Sigmoid colon (tissue), 7 donors: ENCODE measurements at regions of chr7 and their contacts with region 1.

Region 1: GRCh38 chr7:123557398-123558288 is at the start of gene NDUFA5:
- DNase-seq: peak; percentile 99
- H3K4me3 ChIP-seq: peak within 1 kb of the TSS; percentile 66 to 98 (median 91)
- H3K27ac ChIP-seq: peak within 1 kb of the TSS; percentile 87 to 96 (median 92)
- H3K4me1 ChIP-seq: peaks cover 0 to 42% (median 31%) of the 10 kb centered on the region in 4 donors
- H3K27me3 ChIP-seq: no peaks in the 10 kb centered on the region
- CTCF ChIP-seq: no peak
- EP300 ChIP-seq: peak in 1 of 4 donors; percentile 8
- POLR2A ChIP-seq: peak; percentile 42 to 54
- total RNA-seq, gene NDUFA5: 60.4 to 112 (median 89.8) TPM

Region 2: GRCh38 chr7:122143751-122144711 is 1413.6 kb before region 1 on chr7 and contains the start of gene AASS:
- intact Hi-C with region 1: loop called (anchors 10 kb)
- DNase-seq: peak; percentile 100
- H3K4me3 ChIP-seq: peak within 1 kb of the TSS; percentile 80 to 91 (median 88)
- H3K27ac ChIP-seq: peak within 1 kb of the TSS; percentile 91 to 99 (median 97)
- H3K4me1 ChIP-seq: peaks cover 0 to 21% (median 10%) of the 10 kb centered on the region in 4 donors
- H3K27me3 ChIP-seq: no peaks in the 10 kb centered on the region
- CTCF ChIP-seq: no peak
- EP300 ChIP-seq: peak in 3 of 4 donors; percentile 30 to 91 (median 31)
- POLR2A ChIP-seq: peak; percentile 69 to 72
- total RNA-seq, gene AASS: 24.3 to 40.0 (median 27.0) TPM

Region 3: DNA sequence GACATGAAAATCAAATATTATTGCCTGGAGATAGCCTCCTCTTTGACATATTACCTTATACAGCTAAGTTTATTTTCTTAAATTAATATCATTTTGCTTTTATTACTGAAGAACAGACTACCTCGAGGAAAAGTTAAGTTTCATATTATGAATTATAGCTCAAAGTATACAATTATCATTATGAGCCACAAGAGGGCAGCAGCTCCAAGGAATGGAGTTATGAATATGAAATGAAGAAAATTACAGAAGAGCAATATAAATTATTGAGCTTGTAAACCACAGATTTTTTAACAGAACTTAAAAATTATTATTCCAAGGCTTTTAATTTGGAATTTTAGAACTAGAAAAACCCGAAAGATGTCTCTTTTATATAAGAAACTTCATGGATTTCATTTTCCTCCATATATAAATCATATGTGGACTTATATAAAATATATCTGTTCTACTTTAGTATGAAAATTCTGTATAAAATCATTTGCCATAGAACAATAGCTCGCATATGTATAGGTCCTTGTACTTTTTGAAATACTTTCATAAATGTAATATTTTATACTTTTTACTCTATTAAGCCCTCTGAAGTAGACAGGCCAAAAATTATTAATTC is 63.3 kb before region 1 on chr7:
- intact Hi-C with region 1: loop called (anchors 5 kb)
- DNase-seq: no peak
- H3K4me3 ChIP-seq: no peak overlapping the region
- H3K27ac ChIP-seq: no peak overlapping the region
- H3K4me1 ChIP-seq: no peaks in the 10 kb centered on the region
- H3K27me3 ChIP-seq: no peaks in the 10 kb centered on the region
- CTCF ChIP-seq: peak in 3 of 4 experiments; percentile 26 to 64 (median 46)
- EP300 ChIP-seq: no peak
- POLR2A ChIP-seq: no peak

Region 4: DNA sequence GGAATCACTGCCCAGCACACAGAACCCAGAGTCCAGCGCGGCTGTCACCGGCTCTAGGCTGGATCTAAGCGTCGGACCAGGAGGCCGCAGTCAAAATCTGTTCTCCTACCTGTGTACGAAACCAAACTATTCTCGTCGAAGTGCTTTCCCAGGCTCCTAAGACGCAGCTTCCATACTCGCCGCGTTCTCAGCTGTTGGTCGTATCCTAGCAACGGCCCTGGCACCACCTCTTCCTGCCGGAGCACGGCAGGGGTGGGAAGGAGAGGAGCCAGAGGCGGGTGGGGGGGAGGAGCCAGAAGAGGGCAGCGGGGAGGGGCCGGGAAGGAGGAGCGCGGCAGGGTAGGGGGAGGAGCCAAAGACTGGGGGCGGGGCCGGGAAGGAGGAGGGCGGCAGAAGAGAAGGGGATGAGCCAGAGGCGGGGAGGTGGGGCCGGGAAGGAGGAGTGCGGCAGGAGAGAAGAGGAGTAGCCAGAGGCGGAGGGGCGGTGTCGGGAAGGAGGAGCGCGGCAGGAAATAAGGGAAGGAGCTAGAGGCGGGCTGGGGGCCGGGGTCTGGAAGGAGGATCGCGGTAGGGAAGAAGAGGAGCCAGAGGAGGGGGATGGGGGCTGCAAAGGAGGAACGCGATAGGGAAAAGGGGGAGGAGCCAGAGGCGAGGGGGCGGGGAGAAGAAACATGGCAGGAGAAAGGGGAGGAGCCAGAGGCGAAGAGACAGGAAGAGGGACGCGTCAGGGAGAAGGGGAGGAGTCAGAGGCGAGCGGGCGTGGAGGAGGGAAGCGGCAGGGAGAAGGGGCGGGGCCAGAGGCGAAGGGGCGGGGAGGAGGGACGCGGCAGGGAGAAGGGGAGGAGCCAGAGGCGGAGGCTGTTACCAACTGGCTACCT is 23.0 kb before region 1 on chr7 and contains the start of gene IQUB:
- intact Hi-C with region 1: loop called (anchors 1 kb)
- DNase-seq: peak; percentile 99
- H3K4me3 ChIP-seq: peak within 1 kb of the TSS; percentile 61 to 66 (median 62)
- H3K27ac ChIP-seq: peak within 1 kb of the TSS; percentile 82 to 88 (median 86)
- H3K4me1 ChIP-seq: peaks cover 0 to 18% (median 6%) of the 10 kb centered on the region in 4 donors
- H3K27me3 ChIP-seq: no peaks in the 10 kb centered on the region
- CTCF ChIP-seq: no peak
- EP300 ChIP-seq: no peak
- POLR2A ChIP-seq: peak in 1 of 2 donors; percentile 48
- total RNA-seq, gene IQUB: 0.27 to 0.83 (median 0.69) TPM

Region 5: GRCh38 chr7:123748734-123749536 is 191.3 kb after region 1 on chr7 and contains the start of gene WASL:
- intact Hi-C with region 1: loop called (anchors 1 kb)
- DNase-seq: peak; percentile 96
- H3K4me3 ChIP-seq: peak within 1 kb of the TSS; percentile 66 to 94 (median 81)
- H3K27ac ChIP-seq: peak within 1 kb of the TSS; percentile 90 to 99 (median 98)
- H3K4me1 ChIP-seq: peaks cover 2 to 61% (median 51%) of the 10 kb centered on the region in 4 donors
- H3K27me3 ChIP-seq: no peaks in the 10 kb centered on the region
- CTCF ChIP-seq: no peak
- EP300 ChIP-seq: peak in 2 of 4 donors; percentile 3 to 16
- POLR2A ChIP-seq: peak; percentile 89 to 92
- total RNA-seq, gene WASL: 32.4 to 45.3 (median 39.0) TPM